K562 (cell line): ENCODE measurements at regions of chr1 and their contacts with region 1.

Region 1: GRCh38 chr1:999725-1000356 is at the start of gene HES4:
- DNase-seq: peak in 3 of 4 experiments; percentile 88 to 98 (median 95)
- ATAC-seq: peak; percentile 75
- H3K4me3 ChIP-seq: peak within 1 kb of the TSS; percentile 52
- H3K27ac ChIP-seq: peak within 1 kb of the TSS; percentile 95
- H3K4me1 ChIP-seq: peaks cover 24 to 89% of the 10 kb centered on the region in 2 experiments
- H3K27me3 ChIP-seq: peaks cover 0 to 2% of the 10 kb centered on the region in 2 experiments; a peak in 1 of 5 replicates
- CTCF ChIP-seq: no peak
- EP300 ChIP-seq: no peak
- POLR2A ChIP-seq: no peak
- RAD21 ChIP-seq: no peak
- polyA plus RNA-seq, gene HES4: not detected

Region 2: DNA sequence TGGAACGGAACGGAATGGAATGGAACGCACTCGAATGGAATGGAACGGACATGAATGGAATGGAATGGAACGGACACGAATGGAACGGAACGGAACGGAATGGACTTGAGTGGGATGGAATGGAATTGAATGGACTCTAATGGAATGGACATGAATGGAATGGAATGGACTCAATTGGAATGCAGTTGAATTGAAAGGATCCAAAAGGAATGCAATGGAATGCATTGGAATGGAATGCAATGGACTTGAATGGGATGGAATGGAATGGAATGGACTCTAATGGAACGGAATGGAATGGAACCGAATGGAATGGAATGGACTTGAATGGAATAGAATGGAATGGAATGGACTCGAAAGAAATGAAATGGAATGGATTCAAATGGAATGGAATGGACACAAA is 211.0 kb before region 1 on chr1:
- CTCF ChIA-PET with region 1: no interaction called
- POLR2A ChIA-PET with region 1: no interaction called
- in situ Hi-C with region 1: no loop called
- intact Hi-C with region 1: no loop called
- DNase-seq: no peak
- ATAC-seq: no peak
- H3K4me3 ChIP-seq: no peak overlapping the region
- H3K27ac ChIP-seq: no peak overlapping the region
- H3K4me1 ChIP-seq: no peaks in the 10 kb centered on the region
- H3K27me3 ChIP-seq: no peaks in the 10 kb centered on the region
- CTCF ChIP-seq: no peak
- EP300 ChIP-seq: no peak
- POLR2A ChIP-seq: no peak; the same call in 1 of the 2 replicates
- RAD21 ChIP-seq: no peak

Region 3: GRCh38 chr1:1013105-1013921 is 13.5 kb after region 1 on chr1 and contains the start of gene ISG15:
- CTCF ChIA-PET with region 1: no interaction called
- POLR2A ChIA-PET with region 1: interaction called, 16 read pairs
- in situ Hi-C with region 1: no loop called
- intact Hi-C with region 1: no loop called
- DNase-seq: peak; percentile 58 to 91 (median 68)
- ATAC-seq: peak; percentile 94
- H3K4me3 ChIP-seq: peak within 1 kb of the TSS; percentile 50
- H3K27ac ChIP-seq: peak within 1 kb of the TSS; percentile 83
- H3K4me1 ChIP-seq: peaks cover 12 to 30% of the 10 kb centered on the region in 2 experiments
- H3K27me3 ChIP-seq: no peaks in the 10 kb centered on the region
- CTCF ChIP-seq: no peak
- EP300 ChIP-seq: peak; percentile 17
- POLR2A ChIP-seq: peak; percentile 80
- RAD21 ChIP-seq: no peak
- polyA plus RNA-seq, gene ISG15: 7.2 to 12.2 TPM

Region 4: GRCh38 chr1:1479547-1480487 is 480.0 kb after region 1 on chr1:
- CTCF ChIA-PET with region 1: no interaction called
- POLR2A ChIA-PET with region 1: no interaction called
- in situ Hi-C with region 1: no loop called
- intact Hi-C with region 1: no loop called
- DNase-seq: peak in 1 of 4 experiments; percentile 35
- ATAC-seq: no peak
- H3K4me3 ChIP-seq: no peak overlapping the region
- H3K27ac ChIP-seq: no peak overlapping the region
- H3K4me1 ChIP-seq: peaks cover 0 to 18% of the 10 kb centered on the region in 2 experiments; a peak in 1 of 5 replicates
- H3K27me3 ChIP-seq: no peaks in the 10 kb centered on the region; a peak in 2 of 5 replicates
- CTCF ChIP-seq: no peak
- EP300 ChIP-seq: no peak
- POLR2A ChIP-seq: peak; percentile 60
- RAD21 ChIP-seq: no peak